Aorta (tissue), 5 donors: ENCODE measurements at regions of chr17 and their contacts with region 1.

Region 1: DNA sequence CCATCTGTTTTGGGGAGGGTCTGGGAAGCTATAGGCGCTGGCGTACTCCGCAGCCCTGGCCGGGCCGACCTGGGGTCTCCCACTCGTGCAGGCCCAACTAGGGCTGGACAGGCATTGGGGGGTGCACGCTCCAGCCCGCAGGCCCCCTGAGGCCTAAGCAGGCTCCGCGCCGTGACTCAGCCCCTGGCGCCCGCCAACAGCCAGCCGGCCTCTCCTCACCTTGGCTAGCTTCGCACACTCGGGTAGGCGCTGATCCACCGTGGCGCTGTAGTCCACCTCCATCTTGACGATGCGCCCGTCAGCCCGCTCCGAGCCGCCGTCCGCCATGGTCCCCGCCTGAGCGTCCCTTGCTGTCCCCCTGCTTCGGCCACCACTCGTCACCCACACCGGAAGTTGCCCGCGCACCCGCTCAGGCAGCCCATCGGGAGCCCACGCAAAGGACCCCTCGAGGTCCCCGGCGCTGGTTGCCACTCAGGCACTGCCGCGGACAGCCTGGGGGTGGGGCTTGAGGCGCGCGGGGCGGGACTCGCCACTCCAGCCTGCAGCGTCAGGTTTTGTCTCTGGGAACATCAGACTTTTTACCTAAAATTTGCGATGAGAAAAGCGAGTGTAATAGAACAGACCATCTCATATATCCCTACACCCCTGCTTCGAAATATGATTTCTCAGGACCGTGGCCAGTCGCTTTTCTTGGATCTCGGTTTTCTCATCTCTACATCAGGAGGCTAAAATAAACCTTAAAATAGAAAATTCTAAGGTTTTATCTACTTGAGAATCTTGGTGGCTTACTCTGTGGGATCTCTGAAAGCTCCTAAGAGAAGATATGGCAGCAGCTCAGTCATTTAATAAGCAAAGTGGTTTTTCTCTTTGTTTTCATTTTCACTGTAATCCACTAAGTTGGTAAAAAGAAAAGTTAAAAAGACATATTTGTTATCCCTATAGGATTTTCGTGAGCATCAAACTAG is at the start of gene PSMD12:
- DNase-seq: peak; percentile 97 to 98
- ATAC-seq: peak; percentile 98
- H3K4me3 ChIP-seq: peak within 1 kb of the TSS; percentile 89 to 94
- H3K27ac ChIP-seq: peak within 1 kb of the TSS in 1 of 2 donors; percentile 78
- H3K4me1 ChIP-seq: no peaks in the 10 kb centered on the region
- H3K27me3 ChIP-seq: no peaks in the 10 kb centered on the region
- total RNA-seq, gene PSMD12: 38.2 to 46.8 TPM

Region 2: DNA sequence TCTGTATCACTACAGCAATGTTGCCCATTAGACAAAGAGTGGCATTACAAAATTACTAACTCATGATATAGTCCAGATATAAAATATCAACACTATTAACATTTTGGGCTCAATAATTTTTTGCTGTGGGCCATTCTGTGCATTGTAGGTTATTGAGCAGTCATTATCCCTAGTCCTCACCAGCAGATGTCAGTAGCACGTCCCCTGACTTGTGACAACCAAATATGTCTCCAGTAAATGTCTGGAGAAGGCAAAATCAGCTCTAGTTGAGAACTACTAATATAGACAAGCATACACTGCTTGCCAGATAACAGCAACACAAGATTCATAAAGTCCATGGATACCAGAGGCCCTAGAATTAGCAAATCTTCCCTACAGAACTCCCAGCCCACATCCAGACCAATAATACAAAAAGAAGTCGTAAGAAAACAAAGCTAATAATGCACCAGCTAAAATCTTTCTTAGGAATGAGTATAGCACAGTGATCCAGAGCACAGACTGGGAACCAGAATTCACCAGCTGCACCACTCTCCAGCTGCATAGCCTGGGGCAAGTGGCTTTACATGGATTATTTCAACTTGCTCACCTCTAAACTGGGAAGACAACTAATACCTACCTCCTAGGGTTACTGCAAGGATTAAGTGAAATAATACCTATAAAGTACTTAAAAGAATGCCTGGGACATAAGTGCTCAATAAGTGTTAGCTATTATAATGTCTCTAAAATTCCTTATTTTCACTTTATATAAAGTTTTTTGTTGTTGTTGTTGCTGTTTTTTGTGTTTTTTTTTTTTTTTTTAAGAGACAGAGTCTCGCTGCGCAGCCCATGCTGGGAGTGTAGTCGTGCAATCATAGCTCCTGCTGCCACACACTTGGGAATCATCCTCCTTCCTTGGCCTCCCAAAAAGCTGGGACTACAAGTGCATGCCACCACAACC is 145.1 kb before region 1 on chr17:
- intact Hi-C with region 1: no loop called
- DNase-seq: no peak
- ATAC-seq: no peak
- H3K4me3 ChIP-seq: no peak overlapping the region
- H3K27ac ChIP-seq: no peak overlapping the region
- H3K4me1 ChIP-seq: no peaks in the 10 kb centered on the region
- H3K27me3 ChIP-seq: no peaks in the 10 kb centered on the region

Region 3: DNA sequence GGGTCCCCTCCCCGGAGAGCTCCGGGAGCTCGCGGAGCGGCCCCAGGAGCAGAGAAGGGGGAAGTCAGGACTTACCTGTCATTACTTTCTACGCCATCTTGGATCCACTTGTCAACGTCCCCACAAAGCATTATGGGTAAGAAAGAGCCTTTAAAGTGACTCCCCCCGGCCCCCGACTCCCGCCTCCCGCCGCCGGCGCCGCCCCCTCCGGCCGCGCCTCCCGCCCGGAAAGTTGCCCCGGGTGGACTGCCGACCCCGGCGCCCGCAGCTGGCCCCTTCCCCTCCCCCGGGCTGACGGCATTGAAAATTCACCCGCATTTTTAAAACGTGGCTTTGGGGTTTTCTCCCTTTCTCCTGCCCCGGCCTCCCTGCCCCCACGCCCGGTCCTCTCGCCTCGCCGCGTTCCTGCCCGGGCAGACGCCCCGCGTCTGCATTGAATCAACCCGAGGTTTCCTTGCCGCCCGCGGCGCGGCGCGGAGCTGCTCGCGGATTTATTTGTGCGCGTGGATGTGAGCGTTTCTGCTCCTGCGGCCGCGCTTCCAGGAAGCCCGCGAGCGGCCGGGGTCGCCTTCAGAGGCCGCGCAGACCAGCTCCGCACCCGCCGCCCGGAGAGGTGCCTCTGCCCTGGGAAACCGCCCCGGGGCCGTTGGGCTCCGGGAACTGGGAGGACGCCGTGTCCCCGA is 121.3 kb before region 1 on chr17 and contains the start of gene HELZ:
- intact Hi-C with region 1: loop called in 1 of 2 experiments (anchors 10 kb)
- DNase-seq: peak; percentile 86 to 91
- ATAC-seq: peak; percentile 89
- H3K4me3 ChIP-seq: peak within 1 kb of the TSS; percentile 82 to 99
- H3K27ac ChIP-seq: peak within 1 kb of the TSS in 1 of 2 donors; percentile 5
- H3K4me1 ChIP-seq: no peaks in the 10 kb centered on the region
- H3K27me3 ChIP-seq: no peaks in the 10 kb centered on the region
- total RNA-seq, gene HELZ: 47.4 to 75.7 TPM

Region 4: GRCh38 chr17:67520252-67520906 is 153.9 kb after region 1 on chr17:
- intact Hi-C with region 1: no loop called
- DNase-seq: no peak
- ATAC-seq: peak; percentile 72
- H3K4me3 ChIP-seq: no peak overlapping the region
- H3K27ac ChIP-seq: no peak overlapping the region
- H3K4me1 ChIP-seq: no peaks in the 10 kb centered on the region
- H3K27me3 ChIP-seq: no peaks in the 10 kb centered on the region